ENCODE measurements at regions of chr9 and their contacts with region 1.

Region 1: DNA sequence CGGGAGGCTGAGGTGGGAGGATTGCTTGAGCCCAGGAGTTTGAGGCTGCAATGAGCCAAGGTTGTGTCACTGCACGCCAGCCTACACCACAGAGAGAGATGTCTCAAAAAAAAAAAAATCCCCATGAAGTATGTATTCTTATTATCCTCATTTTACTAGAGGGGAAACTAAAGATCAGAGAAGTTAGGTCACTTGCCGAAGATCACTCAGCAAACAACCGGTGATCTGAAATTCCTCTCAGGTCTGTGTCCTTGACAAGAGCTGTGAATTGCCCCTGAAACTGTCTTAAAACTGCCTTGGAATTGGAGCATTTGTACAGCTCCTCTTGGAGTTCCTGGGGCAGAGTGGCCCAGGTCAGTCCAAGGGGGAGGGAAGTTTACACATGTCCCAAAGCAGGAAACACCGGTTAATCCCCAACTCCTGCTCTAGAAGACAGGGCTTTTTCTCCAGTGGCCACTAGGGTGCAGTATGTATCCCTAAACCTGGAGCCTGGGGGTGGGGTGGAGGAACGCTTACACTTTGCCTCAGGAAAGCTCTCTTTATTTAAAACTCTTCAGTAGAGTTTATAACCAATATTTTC is 27.6 kb downstream of the AQP7 start:
- DNase-seq: peak; percentile 22 to 79 (median 70)
- ATAC-seq: peak; percentile 95
- H3K4me3 ChIP-seq: no peak overlapping the region
- H3K4me3 Mint-ChIP-seq: peak overlapping the region; percentile 54
- H3K27ac ChIP-seq: no peak overlapping the region
- H3K27ac Mint-ChIP-seq: no peak overlapping the region
- H3K4me1 ChIP-seq: no peaks in the 10 kb centered on the region
- H3K4me1 Mint-ChIP-seq: peaks cover 9% of the 10 kb centered on the region
- H3K27me3 ChIP-seq: no peaks in the 10 kb centered on the region
- H3K27me3 Mint-ChIP-seq: no peaks in the 10 kb centered on the region
- CTCF ChIP-seq: peak; percentile 84

Region 2: DNA sequence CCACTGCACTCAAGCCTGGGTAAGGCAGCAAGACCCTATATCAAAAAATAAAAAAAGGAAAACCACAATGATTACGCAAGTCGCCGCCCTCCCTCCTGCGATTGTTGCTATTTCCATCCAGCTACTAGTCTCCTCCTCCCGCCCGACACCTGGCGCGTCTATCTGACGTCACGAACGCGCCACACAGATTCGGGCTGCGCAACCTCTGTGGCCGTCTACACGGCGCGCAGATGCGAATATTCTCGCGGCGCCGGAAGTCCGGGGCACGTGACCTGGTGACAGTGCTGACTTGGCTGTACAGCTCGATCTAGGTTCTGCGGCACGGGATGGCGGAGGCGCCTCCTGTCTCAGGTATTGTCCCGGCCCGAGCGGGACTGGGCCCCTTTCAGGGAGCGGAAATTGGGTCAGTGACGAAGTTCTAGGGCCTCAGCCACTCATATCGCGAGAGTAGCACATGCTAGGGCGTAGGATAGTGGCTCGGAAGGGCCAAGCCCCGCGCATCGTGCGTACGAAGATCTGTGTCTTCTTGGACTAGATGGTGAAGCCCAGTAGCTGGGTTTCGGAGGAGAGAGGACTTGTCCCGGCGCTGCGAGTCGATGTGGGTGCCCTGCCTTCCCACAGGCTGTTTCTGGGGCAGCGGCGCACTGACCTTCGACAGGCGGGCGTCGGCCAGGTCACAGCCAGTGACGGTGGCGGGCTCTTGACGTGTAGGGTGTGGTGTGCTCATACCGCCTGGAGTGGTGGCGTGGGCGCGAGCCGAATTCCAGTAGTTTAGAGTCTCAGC is 84.3 kb before region 1 on chr9 and contains the start of gene NFX1:
- CTCF ChIA-PET with region 1: no interaction called
- POLR2A ChIA-PET with region 1: no interaction called
- intact Hi-C with region 1: no loop called
- DNase-seq: peak; percentile 97 to 100 (median 99)
- ATAC-seq: peak; percentile 76
- H3K4me3 ChIP-seq: peak within 1 kb of the TSS; percentile 57 to 73
- H3K4me3 Mint-ChIP-seq: peak within 1 kb of the TSS; percentile 88
- H3K27ac ChIP-seq: peak within 1 kb of the TSS; percentile 96 to 98
- H3K27ac Mint-ChIP-seq: peak within 1 kb of the TSS; percentile 100
- H3K4me1 ChIP-seq: peaks cover 62% of the 10 kb centered on the region
- H3K4me1 Mint-ChIP-seq: peaks cover 66% of the 10 kb centered on the region
- H3K27me3 ChIP-seq: no peaks in the 10 kb centered on the region
- H3K27me3 Mint-ChIP-seq: no peaks in the 10 kb centered on the region
- CTCF ChIP-seq: no peak
- total RNA-seq, gene NFX1: 32.9 to 37.9 TPM

Region 3: GRCh38 chr9:33364127-33364526 is 10.6 kb before region 1 on chr9:
- CTCF ChIA-PET with region 1: interaction called, 12 read pairs
- POLR2A ChIA-PET with region 1: no interaction called
- intact Hi-C with region 1: no loop called
- DNase-seq: no peak
- ATAC-seq: no peak
- H3K4me3 ChIP-seq: no peak overlapping the region
- H3K4me3 Mint-ChIP-seq: no peak overlapping the region
- H3K27ac ChIP-seq: no peak overlapping the region
- H3K27ac Mint-ChIP-seq: no peak overlapping the region
- H3K4me1 ChIP-seq: no peaks in the 10 kb centered on the region
- H3K4me1 Mint-ChIP-seq: no peaks in the 10 kb centered on the region
- H3K27me3 ChIP-seq: no peaks in the 10 kb centered on the region
- H3K27me3 Mint-ChIP-seq: no peaks in the 10 kb centered on the region
- CTCF ChIP-seq: no peak

Region 4: DNA sequence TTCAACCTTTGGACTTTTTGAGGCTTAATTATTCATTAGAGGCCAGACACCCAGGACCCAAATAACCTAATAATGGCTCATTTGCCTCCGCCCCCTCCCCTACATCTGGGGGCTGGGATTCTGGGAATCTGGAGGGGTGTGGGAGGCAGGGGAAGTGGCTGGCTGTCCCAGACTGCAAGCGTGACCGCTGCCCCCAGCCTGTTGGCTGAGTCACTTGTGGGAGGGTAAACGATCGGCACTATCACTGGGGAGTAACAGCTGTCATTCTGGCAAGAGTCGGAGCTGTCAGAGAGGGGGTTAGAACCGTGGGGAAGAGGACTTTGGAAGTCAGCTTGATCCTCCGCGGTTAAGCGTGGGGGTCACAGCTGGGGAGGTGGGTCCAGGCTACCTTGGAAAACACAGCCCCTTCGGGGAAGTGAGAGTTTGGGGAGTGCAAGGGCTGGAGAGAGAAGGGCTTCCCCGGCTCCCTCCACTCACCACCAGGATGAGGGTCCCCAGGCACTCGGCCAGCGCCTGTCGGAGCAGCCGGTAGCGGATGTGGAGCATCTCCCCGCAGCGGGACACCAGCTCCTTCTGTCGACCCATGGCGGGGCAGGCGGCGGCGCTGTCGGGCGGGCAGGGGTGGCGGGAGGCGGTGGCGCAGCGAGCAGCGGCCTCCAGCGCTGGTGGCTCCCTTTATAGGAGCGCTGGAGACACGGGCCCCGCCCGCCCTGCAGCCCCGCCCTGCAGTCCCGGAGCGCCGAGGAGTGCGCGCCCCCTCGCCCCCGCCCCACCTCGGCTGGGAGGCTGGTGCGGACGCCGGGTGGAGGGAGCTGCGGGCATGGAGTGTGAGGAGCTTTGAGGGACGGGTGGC is 72.4 kb after region 1 on chr9 and contains the start of gene AQP3:
- CTCF ChIA-PET with region 1: interaction called, 18 read pairs
- POLR2A ChIA-PET with region 1: interaction called, 4 read pairs
- intact Hi-C with region 1: loop called in 1 of 2 experiments (anchors 1 kb)
- DNase-seq: peak; percentile 49 to 88 (median 76)
- ATAC-seq: peak; percentile 53
- H3K4me3 ChIP-seq: peak within 1 kb of the TSS; percentile 58 to 79
- H3K4me3 Mint-ChIP-seq: peak within 1 kb of the TSS; percentile 95
- H3K27ac ChIP-seq: peak within 1 kb of the TSS; percentile 62 to 81
- H3K27ac Mint-ChIP-seq: peak within 1 kb of the TSS; percentile 96
- H3K4me1 ChIP-seq: peaks cover 39% of the 10 kb centered on the region
- H3K4me1 Mint-ChIP-seq: peaks cover 52% of the 10 kb centered on the region
- H3K27me3 ChIP-seq: no peaks in the 10 kb centered on the region
- H3K27me3 Mint-ChIP-seq: no peaks in the 10 kb centered on the region
- CTCF ChIP-seq: no peak
- total RNA-seq, gene AQP3: 48.0 to 50.3 TPM

Region 5: DNA sequence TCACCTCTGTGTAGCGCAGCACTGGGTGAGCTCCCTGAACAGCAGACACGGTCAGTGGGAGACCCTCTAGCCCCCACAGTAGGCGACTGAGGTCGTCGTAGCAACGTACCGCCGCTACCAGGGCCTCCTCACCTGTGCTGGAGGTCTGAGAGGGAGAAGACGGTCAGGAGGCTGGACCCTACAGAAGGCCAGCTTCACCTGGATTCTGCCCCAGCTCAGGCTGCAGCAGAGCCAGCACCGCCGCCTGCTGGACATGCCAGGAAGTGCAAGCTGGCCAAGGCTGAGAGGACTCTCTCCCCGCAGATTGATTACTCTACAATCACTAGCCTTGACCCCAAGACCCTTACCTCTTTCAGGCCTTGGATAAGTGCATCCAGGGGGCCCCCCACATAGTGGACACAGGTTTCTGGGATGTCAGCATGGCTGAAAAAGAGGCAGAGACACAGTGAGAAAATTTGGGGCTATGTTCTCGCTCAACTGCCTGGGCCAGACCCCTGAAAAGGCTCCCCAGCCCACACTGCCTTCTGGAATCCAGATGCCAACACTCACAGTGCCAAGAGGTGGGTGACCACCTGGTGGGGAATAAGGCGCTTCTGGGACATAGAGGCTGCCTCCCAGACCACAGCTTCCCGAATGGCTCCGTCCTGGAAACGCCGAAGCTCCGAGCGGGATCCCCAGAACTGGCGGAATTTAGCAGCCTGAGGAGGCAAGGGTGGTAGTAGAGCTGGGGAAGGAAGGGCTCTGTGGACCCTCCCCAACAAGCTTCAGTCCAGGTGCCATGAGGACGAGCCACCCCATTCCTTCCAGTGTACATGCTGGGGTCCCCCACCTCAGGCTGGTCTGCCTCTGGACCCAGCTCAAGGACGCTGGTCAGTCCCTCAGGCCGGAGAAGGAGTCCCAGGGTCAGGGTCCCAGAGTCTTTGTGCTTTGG is 92.1 kb after region 1 on chr9:
- CTCF ChIA-PET with region 1: interaction called, 100 read pairs
- POLR2A ChIA-PET with region 1: interaction called, 7 read pairs
- intact Hi-C with region 1: loop called (anchors 1 kb)
- DNase-seq: peak; percentile 42 to 85 (median 72)
- ATAC-seq: peak; percentile 93
- H3K4me3 ChIP-seq: no peak overlapping the region
- H3K4me3 Mint-ChIP-seq: no peak overlapping the region
- H3K27ac ChIP-seq: no peak overlapping the region
- H3K27ac Mint-ChIP-seq: peak overlapping the region; percentile 22
- H3K4me1 ChIP-seq: peaks cover 5% of the 10 kb centered on the region
- H3K4me1 Mint-ChIP-seq: peaks cover 10% of the 10 kb centered on the region
- H3K27me3 ChIP-seq: no peaks in the 10 kb centered on the region
- H3K27me3 Mint-ChIP-seq: no peaks in the 10 kb centered on the region
- CTCF ChIP-seq: peak; percentile 85

Region 6: DNA sequence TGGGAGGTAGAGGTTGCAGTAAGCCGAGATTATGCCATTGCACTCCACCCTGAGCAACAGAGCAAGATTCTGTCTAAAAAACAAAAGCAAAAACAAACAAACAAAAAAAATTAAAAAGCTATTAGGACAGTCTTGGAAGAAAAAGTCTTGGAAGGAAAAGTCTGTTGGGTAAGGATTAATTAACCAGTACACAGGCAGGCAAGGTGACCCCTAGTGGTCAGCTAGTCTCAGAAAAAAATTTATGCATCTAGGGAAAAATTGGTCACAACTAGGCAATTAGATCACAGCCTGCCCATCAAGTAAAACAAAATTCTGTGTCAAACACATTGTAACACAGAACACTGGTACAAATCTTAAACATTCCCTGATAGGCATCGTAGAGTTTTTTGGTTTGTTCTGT is 142.6 kb after region 1 on chr9:
- CTCF ChIA-PET with region 1: interaction called, 3 read pairs
- POLR2A ChIA-PET with region 1: no interaction called
- intact Hi-C with region 1: loop called in 1 of 2 experiments (anchors 2 kb)
- DNase-seq: peak in 2 of 9 experiments; percentile 26 to 41
- ATAC-seq: no peak
- H3K4me3 ChIP-seq: no peak overlapping the region
- H3K4me3 Mint-ChIP-seq: no peak overlapping the region
- H3K27ac ChIP-seq: no peak overlapping the region
- H3K27ac Mint-ChIP-seq: no peak overlapping the region
- H3K4me1 ChIP-seq: no peaks in the 10 kb centered on the region
- H3K4me1 Mint-ChIP-seq: no peaks in the 10 kb centered on the region
- H3K27me3 ChIP-seq: no peaks in the 10 kb centered on the region
- H3K27me3 Mint-ChIP-seq: peaks cover 24% of the 10 kb centered on the region
- CTCF ChIP-seq: peak; percentile 40

Region 7: DNA sequence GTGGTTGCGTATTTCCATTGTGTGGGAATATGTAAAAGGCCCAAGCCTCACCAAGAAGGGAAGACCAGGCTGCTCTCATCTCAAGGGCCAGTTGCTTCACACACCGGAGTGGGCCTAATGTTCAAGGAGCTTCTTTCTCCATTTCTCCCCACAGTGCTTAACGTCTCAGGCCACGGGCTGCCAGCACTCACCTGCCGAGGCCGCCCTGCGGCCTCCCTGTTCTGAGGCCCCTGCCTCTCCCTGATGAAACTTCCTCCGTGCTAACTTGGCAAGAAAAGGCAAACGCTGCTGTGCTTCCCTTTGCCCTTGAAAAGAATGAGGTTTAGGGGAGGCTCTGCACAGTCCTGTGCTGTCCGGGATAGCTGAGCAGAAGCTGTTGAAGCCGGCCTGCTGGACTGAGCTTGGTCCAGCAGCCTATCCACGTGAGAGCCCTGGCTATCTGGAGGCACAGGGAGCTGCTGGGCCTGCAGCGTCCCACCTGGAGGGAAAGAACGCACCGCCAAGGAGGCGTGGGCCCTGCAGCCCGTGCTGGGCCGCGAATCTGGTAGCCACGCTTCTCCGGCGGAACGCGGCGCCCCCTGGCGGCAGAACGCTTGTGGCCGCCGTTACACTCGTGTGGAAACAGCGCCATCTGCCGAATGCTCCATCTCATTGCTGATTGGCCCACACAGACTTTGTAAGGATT is 347.1 kb after region 1 on chr9:
- CTCF ChIA-PET with region 1: no interaction called
- POLR2A ChIA-PET with region 1: no interaction called
- intact Hi-C with region 1: loop called (anchors 1 to 2 kb)
- DNase-seq: peak; percentile 75 to 94 (median 87)
- ATAC-seq: peak; percentile 87
- H3K4me3 ChIP-seq: no peak overlapping the region
- H3K4me3 Mint-ChIP-seq: no peak overlapping the region
- H3K27ac ChIP-seq: no peak overlapping the region
- H3K27ac Mint-ChIP-seq: no peak overlapping the region
- H3K4me1 ChIP-seq: no peaks in the 10 kb centered on the region
- H3K4me1 Mint-ChIP-seq: no peaks in the 10 kb centered on the region
- H3K27me3 ChIP-seq: no peaks in the 10 kb centered on the region
- H3K27me3 Mint-ChIP-seq: peaks cover 15% of the 10 kb centered on the region
- CTCF ChIP-seq: peak; percentile 100